ENCODE measurements at regions of chr17 and their contacts with region 1.

Region 1: GRCh38 chr17:38415250-38416194 is 12.7 kb upstream of the ARHGAP23 start:
- DNase-seq: no peak
- H3K4me3 ChIP-seq: no peak overlapping the region
- H3K4me3 Mint-ChIP-seq: no peak overlapping the region
- H3K27ac ChIP-seq: no peak overlapping the region
- H3K27ac Mint-ChIP-seq: no peak overlapping the region
- H3K4me1 ChIP-seq: peaks cover 9% of the 10 kb centered on the region
- H3K4me1 Mint-ChIP-seq: peaks cover 2 to 12% (median 3%) of the 10 kb centered on the region in 4 donors
- H3K27me3 ChIP-seq: peaks cover 12% of the 10 kb centered on the region
- H3K27me3 Mint-ChIP-seq: peaks cover 25 to 31% of the 10 kb centered on the region in 2 donors

Region 2: GRCh38 chr17:38333635-38334295 is 81.8 kb before region 1 on chr17:
- CTCF ChIA-PET with region 1: interaction called, 14 read pairs
- POLR2A ChIA-PET with region 1: no interaction called
- intact Hi-C with region 1: no loop called
- DNase-seq: peak in 4 of 5 donors; percentile 11 to 26 (median 16)
- H3K4me3 ChIP-seq: no peak overlapping the region
- H3K4me3 Mint-ChIP-seq: no peak overlapping the region
- H3K27ac ChIP-seq: no peak overlapping the region
- H3K27ac Mint-ChIP-seq: peak overlapping the region in 1 of 7 donors; percentile 57
- H3K4me1 ChIP-seq: no peaks in the 10 kb centered on the region
- H3K4me1 Mint-ChIP-seq: no peaks in the 10 kb centered on the region
- H3K27me3 ChIP-seq: no peaks in the 10 kb centered on the region
- H3K27me3 Mint-ChIP-seq: peaks cover 7 to 21% of the 10 kb centered on the region in 2 donors

Measured in CD4-positive, alpha-beta memory T cell (primary cell).